ENCODE measurements at regions of chr2 and their contacts with region 1.

Region 1: GRCh38 chr2:102063941-102064678 is 72.3 kb downstream of the IL1R2 start:
- DNase-seq: no peak
- H3K4me3 Mint-ChIP-seq: no peak overlapping the region
- H3K27ac Mint-ChIP-seq: no peak overlapping the region
- H3K4me1 Mint-ChIP-seq: peaks cover 24% of the 10 kb centered on the region
- H3K27me3 Mint-ChIP-seq: peaks cover 11% of the 10 kb centered on the region

Region 2: GRCh38 chr2:101974663-101975062 is 89.4 kb before region 1 on chr2:
- intact Hi-C with region 1: no loop called
- DNase-seq: no peak
- H3K4me3 Mint-ChIP-seq: no peak overlapping the region
- H3K27ac Mint-ChIP-seq: no peak overlapping the region
- H3K4me1 Mint-ChIP-seq: peaks cover 6% of the 10 kb centered on the region
- H3K27me3 Mint-ChIP-seq: no peaks in the 10 kb centered on the region

Region 3: DNA sequence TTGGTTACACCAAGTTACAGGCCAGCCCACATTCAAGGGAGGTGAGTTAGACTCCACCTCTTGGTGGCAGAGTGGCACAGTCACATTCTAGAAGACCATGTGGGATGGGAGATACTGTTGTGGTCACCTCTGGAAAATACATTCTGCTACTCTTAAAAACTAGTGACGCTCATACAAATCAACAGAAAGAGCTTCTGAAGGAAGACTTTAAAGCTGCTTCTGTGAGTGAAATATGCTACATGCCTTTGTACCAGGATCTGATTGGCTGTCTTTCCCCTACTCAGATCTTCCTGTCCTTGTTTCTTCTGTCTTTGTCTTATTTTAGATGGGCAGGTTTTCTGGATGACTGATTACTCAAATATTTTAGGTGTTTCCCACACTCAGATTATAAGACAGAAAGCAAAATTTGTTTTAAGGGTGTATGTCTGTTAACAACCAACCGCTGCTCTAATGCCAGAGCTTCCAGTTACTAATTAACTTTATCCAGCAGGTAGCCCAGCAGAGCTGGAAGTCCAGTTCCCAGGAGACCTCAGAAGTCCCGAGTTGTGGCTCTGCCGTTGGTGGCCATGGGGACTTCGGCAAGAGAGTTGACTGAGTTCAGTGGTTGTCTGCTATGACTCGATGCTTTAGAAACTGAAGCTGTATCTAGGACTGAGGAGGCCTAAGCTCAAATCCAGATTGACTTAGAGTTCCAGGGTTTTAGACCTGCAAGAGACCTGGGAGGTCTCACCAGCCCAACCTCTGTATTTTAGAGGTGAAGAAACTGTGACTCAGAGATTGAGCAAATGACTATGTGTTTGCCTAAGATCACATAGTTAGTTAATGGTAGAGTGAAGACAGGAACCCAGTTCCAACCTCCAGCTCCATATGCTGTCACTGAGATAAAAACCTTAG is 65.0 kb before region 1 on chr2:
- intact Hi-C with region 1: loop called (anchors 1 kb)
- DNase-seq: no peak
- H3K4me3 Mint-ChIP-seq: no peak overlapping the region
- H3K27ac Mint-ChIP-seq: peak overlapping the region; percentile 68
- H3K4me1 Mint-ChIP-seq: peaks cover 26% of the 10 kb centered on the region
- H3K27me3 Mint-ChIP-seq: no peaks in the 10 kb centered on the region

Region 4: GRCh38 chr2:102044235-102044896 is 19.7 kb before region 1 on chr2:
- intact Hi-C with region 1: loop called (anchors 2 kb)
- DNase-seq: no peak
- H3K4me3 Mint-ChIP-seq: no peak overlapping the region
- H3K27ac Mint-ChIP-seq: no peak overlapping the region
- H3K4me1 Mint-ChIP-seq: peaks cover 15% of the 10 kb centered on the region
- H3K27me3 Mint-ChIP-seq: peaks cover 47% of the 10 kb centered on the region

Region 5: GRCh38 chr2:102114290-102114721 is 50.2 kb after region 1 on chr2:
- intact Hi-C with region 1: loop called (anchors 1 kb)
- DNase-seq: no peak
- H3K4me3 Mint-ChIP-seq: no peak overlapping the region
- H3K27ac Mint-ChIP-seq: no peak overlapping the region
- H3K4me1 Mint-ChIP-seq: peaks cover 25% of the 10 kb centered on the region
- H3K27me3 Mint-ChIP-seq: peaks cover 43% of the 10 kb centered on the region

Region 6: DNA sequence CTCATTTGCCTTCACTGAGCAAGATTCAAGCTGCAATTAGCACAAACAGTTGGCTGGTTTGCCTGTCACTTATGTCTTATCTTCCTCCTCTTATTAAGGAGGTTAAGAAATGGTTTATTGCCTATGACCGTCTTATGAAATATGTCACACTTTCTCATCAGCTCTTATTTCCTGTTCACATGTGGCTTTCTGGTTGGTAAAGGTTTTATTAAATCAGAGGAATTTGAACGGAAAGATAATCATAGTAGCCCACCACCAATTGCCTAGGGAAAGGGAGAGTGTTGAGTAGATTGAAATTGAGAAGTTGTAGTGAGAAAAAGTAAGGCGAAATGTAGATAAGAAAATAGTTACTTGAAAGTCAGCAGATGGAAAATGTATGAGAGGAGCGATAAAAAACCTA is 74.2 kb after region 1 on chr2:
- intact Hi-C with region 1: loop called (anchors 2 kb)
- DNase-seq: no peak
- H3K4me3 Mint-ChIP-seq: no peak overlapping the region
- H3K27ac Mint-ChIP-seq: peak overlapping the region; percentile 3
- H3K4me1 Mint-ChIP-seq: peaks cover 25% of the 10 kb centered on the region
- H3K27me3 Mint-ChIP-seq: peaks cover 39% of the 10 kb centered on the region

Region 7: DNA sequence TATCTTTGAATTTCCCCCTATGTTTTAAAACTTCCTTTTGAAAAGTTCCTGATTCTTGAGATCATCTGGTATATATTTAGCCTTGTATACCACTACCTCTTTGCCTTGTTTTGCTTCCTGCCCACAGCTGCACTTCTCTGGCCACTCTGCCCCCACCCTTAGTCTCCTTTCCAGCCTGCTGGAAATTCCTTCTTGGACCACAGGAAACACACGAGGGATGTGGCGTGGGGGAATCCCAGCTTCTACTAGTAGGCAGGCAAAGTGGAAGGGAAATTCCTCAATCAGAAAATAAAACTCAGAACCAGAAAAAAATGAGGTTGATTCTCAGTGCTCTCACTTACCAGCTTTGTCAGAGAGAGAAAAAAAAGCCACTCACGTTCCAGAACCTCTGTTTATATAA is 372.2 kb after region 1 on chr2:
- intact Hi-C with region 1: loop called (anchors 1 kb)
- DNase-seq: no peak
- H3K4me3 Mint-ChIP-seq: peak overlapping the region; percentile 9
- H3K27ac Mint-ChIP-seq: peak overlapping the region; percentile 63
- H3K4me1 Mint-ChIP-seq: peaks cover 32% of the 10 kb centered on the region
- H3K27me3 Mint-ChIP-seq: no peaks in the 10 kb centered on the region

Region 8: DNA sequence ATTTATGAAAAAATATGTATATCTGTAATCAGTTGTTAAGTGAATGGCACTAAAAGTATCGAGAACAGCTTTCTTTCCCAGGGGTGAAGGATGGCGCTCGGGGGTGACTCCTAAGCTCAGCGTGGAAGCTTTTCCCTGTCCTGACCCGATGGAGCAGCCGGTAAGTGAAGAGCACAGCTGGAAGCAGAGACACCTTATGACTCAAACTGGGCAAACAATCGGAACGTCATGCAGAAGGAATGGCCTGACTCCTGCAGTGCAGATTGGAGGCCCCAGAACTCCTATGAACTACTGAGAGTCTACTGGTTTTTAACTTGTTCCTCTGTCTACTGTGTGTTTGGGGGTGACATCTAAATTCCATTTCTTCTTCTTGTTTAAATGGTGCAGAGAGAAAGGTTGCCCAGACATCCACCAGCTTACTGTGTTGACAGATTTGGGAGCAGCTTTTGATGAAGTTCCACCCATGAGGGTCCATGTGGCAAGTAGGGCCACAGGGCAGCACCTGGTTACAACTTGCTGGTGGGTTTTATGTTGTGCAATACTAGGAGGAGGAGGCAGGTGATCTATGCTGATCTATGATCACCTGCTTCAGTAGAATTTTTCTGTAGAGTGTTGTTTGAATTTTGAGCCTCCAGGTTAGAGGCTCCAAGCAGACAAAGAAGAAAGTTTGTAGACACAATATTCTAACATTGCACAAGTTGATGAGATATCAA is 644.9 kb after region 1 on chr2:
- intact Hi-C with region 1: no loop called
- DNase-seq: no peak
- H3K4me3 Mint-ChIP-seq: no peak overlapping the region
- H3K27ac Mint-ChIP-seq: no peak overlapping the region
- H3K4me1 Mint-ChIP-seq: no peaks in the 10 kb centered on the region
- H3K27me3 Mint-ChIP-seq: peaks cover 2% of the 10 kb centered on the region